ENCODE measurements at regions of chr12 and their contacts with region 1.

Region 1: DNA sequence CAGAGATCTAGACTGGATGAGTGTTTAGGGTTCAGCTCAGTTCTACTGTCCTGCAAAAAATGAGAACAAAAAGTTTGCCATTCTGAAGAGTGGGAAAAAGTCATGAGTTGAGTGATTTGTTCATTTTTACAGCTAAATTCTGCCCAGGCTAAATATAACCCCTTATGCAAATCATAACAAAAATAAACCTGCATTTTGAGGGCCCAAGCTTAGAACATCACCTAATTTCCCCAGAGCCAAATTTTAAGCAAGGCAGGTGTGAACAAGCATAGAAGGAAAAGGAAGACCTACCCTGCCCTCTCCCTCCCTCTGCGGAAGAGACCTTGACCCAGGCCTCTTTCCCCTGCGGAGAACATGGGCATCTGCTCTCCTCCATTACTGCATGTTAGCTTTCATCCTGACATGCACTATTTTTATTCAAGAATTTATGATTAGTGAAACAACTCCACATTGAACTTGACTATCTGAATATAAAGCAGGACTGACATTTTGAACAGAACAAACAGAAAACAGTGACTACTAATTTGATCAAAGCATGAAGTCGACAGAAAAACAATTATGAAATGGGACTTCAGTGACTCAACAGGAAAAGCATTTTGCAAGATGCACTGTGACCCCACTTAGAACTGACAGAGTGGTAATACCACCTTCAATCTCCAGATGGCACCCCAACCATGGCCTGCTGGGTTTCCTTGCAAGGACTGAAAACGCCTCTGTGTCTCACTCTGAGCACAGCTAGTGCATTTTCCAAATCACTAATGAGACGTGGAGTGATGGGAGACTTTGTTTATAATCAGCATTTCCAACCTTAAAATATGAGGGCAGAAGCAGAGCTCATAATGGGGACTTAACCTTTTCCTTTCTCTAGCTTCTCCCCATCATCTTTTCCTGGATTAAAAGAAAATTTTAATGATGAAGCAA is 30.9 kb upstream of the SELPLG start:
- DNase-seq: peak; percentile 52 to 92 (median 82)
- H3K4me3 ChIP-seq: peak overlapping the region in 1 of 59 donors; percentile 10
- H3K27ac ChIP-seq: peak overlapping the region; percentile 18 to 90 (median 77)
- H3K27me3 ChIP-seq: no peaks in the 10 kb centered on the region
- CTCF ChIP-seq: peak; percentile 87 to 99 (median 96)

Region 2: DNA sequence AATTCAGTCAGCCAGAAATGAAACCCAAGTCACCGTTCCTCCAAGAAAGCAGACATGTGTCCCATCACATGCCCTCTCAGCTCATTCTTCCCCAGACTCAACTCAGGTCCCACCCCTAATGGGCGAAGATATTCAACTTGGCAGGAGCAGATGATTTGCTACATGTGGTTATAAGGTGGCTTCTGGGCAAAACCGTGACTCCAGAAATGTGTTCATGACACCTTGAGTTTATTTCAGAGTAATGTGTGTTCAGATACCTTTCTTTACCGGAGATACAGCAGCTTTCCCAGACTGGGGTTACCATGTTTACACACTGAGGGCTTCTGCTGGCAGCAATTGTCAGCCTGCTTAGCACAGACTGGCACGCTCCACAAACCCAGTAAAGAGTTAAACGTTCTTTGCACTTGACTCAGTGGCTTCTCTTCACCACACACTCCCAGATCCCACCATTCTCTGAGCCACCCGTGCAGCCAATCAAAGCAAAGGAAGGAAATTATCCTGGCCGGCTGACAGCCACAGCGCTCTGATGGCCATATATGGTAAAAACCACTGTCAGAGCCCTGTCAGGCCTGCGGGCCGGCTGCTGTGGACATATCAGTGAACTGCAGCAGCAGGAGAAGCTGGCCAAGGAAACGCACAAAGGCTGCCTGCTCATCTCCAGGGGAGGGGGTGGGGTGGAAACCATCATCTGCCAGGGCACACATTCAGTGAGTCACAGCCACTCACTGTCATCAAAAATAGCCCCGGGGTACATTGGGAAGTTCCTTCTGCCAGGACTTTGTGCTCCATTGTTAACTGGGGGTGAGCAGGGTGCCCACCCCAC is 26.8 kb after region 1 on chr12:
- intact Hi-C with region 1: loop called in 1 of 2 experiments (anchors 2 kb)
- DNase-seq: peak; percentile 76 to 99 (median 96)
- H3K4me3 ChIP-seq: peak overlapping the region in 58 of 59 donors; percentile 3 to 64 (median 41)
- H3K27ac ChIP-seq: peak overlapping the region; percentile 84 to 99 (median 95)
- H3K27me3 ChIP-seq: no peaks in the 10 kb centered on the region
- CTCF ChIP-seq: peak in 40 of 56 donors; percentile 9 to 59 (median 41)

Region 3: GRCh38 chr12:108731105-108731865 is 66.7 kb after region 1 on chr12 and contains the start of gene CORO1C:
- intact Hi-C with region 1: loop called (anchors 2 to 10 kb)
- DNase-seq: peak; percentile 85 to 96 (median 90)
- H3K4me3 ChIP-seq: peak within 1 kb of the TSS; percentile 64 to 97 (median 88)
- H3K27ac ChIP-seq: peak within 1 kb of the TSS; percentile 71 to 99 (median 95)
- H3K27me3 ChIP-seq: no peaks in the 10 kb centered on the region
- CTCF ChIP-seq: peak; percentile 48 to 93 (median 82)
- total RNA-seq, gene CORO1C: 87.2 to 202 (median 122) TPM

Region 4: DNA sequence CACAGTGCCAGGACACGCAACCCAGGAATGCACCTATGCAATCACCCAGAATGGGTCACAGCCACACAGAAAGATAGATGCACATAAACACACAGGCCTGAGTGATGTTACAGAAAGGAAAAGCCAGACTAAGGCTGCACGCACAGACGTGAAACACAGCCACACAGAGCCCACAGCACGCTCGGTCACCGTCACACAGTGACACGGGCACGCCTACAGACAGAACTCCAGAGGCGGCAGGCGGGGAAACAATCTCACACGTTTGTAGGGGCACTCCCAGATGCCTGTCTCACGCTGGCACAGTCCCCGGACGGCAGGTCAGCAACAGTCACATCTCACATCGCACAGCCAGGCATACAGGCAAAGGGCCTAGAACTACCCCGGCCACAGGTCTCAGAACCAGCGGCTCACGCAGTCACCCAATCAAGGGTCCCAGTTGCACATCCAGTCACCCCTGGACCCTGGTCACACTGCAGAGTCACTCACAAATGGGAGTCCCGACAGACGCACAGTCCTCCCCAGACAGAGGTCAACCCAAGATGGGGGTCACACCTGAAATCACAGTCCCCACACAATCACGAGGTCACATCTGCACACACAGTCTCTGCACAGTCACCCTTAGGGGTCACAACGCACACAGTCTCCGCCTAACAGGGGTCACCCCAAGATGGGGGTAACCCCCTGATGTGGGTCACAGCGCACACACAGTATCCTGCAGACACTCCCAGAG is 192.0 kb after region 1 on chr12:
- intact Hi-C with region 1: loop called in 1 of 2 experiments (anchors 5 kb)
- DNase-seq: peak in 9 of 10 donors; percentile 39 to 82 (median 69)
- H3K4me3 ChIP-seq: peak overlapping the region; percentile 60 to 95 (median 81)
- H3K27ac ChIP-seq: peak overlapping the region in 58 of 59 donors; percentile 47 to 95 (median 87)
- H3K27me3 ChIP-seq: no peaks in the 10 kb centered on the region
- CTCF ChIP-seq: no peak